CD14-positive monocyte (primary cell): ENCODE measurements at regions of chr7 and their contacts with region 1.

Region 1: GRCh38 chr7:143380255-143380645 is 895 bp upstream of the ZYX start:
- DNase-seq: peak; percentile 93 to 95 (median 93)
- H3K4me3 ChIP-seq: peak overlapping the region; percentile 81 to 99 (median 98)
- H3K4me3 Mint-ChIP-seq: peak overlapping the region; percentile 92 to 97
- H3K27ac ChIP-seq: peak overlapping the region; percentile 99
- H3K27ac Mint-ChIP-seq: peak overlapping the region in 6 of 7 donors; percentile 97 to 100 (median 98)
- H3K4me1 ChIP-seq: peaks cover 69 to 80% of the 10 kb centered on the region in 2 donors
- H3K4me1 Mint-ChIP-seq: peaks cover 47% of the 10 kb centered on the region
- H3K27me3 ChIP-seq: no peaks in the 10 kb centered on the region
- H3K27me3 Mint-ChIP-seq: peaks cover 0 to 2% (median 0%) of the 10 kb centered on the region in 3 donors
- CTCF ChIP-seq: peak; percentile 88

Region 2: GRCh38 chr7:143487566-143487965 is 107.3 kb after region 1 on chr7:
- intact Hi-C with region 1: loop called in 1 of 2 experiments (anchors 5 kb)
- DNase-seq: peak; percentile 68 to 82 (median 73)
- H3K4me3 ChIP-seq: peak overlapping the region; percentile 4 to 69 (median 53)
- H3K4me3 Mint-ChIP-seq: peak overlapping the region; percentile 55 to 65
- H3K27ac ChIP-seq: peak overlapping the region; percentile 65 to 94
- H3K27ac Mint-ChIP-seq: peak overlapping the region; percentile 86 to 96 (median 91)
- H3K4me1 ChIP-seq: peaks cover 44 to 55% of the 10 kb centered on the region in 2 donors
- H3K4me1 Mint-ChIP-seq: peaks cover 49% of the 10 kb centered on the region
- H3K27me3 ChIP-seq: no peaks in the 10 kb centered on the region
- H3K27me3 Mint-ChIP-seq: no peaks in the 10 kb centered on the region
- CTCF ChIP-seq: no peak